ENCODE measurements at regions of chr4 and their contacts with region 1.

Region 1: GRCh38 chr4:155787113-155787710 is 28.4 kb downstream of the GUCY1B1 start:
- DNase-seq: no peak
- ATAC-seq: peak; percentile 95
- H3K4me3 ChIP-seq: no peak overlapping the region
- H3K27ac ChIP-seq: no peak overlapping the region
- H3K4me1 ChIP-seq: peaks cover 3% of the 10 kb centered on the region
- H3K27me3 ChIP-seq: no peaks in the 10 kb centered on the region
- CTCF ChIP-seq: peak; percentile 75

Region 2: DNA sequence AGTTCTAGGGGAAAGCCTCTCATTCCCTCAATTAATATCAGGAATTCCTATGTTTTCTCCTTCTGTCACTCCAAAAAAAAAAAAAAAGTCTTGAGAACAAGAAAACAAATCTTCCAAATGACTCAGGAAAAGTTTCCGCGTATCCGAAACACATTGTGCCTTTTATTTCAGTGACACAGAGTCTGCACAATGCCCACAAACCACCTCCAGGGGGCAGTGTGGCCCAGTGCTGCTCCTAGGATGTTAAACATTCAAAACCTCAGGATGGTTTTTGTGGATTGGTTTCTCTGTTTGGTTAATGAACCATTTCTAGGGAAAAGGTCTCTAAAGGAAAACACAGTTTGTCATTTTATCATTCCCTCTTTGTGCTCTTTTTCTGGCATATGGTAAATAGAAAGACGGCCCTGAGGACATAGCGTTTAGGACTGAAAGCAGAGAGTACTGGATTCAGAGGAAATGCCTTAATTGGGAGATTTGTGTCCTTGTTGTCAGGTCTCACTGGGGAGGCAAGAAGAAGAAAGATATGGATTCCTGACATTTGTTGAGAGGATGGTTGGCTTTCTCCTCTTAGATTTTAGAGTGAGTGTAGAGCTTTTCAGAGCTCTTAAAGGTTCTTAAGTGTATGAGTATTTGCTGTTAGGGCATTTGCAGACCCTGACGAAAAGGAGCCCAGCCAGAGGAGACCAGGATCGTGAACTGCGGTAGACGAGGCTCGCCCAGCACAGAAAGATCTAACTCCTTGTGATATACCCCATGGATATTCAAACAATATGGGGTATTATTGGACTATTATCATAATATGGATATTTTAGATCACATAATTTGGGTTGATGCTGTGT is 344.7 kb before region 1 on chr4:
- intact Hi-C with region 1: loop called (anchors 10 kb)
- DNase-seq: peak; percentile 87
- ATAC-seq: peak; percentile 97
- H3K4me3 ChIP-seq: peak overlapping the region; percentile 15
- H3K27ac ChIP-seq: peak overlapping the region; percentile 18
- H3K4me1 ChIP-seq: no peaks in the 10 kb centered on the region
- H3K27me3 ChIP-seq: no peaks in the 10 kb centered on the region
- CTCF ChIP-seq: peak; percentile 95

Region 3: GRCh38 chr4:156169011-156169410 is 381.8 kb after region 1 on chr4:
- intact Hi-C with region 1: no loop called
- DNase-seq: no peak
- ATAC-seq: peak; percentile 69
- H3K4me3 ChIP-seq: no peak overlapping the region
- H3K27ac ChIP-seq: no peak overlapping the region
- H3K4me1 ChIP-seq: no peaks in the 10 kb centered on the region
- H3K27me3 ChIP-seq: no peaks in the 10 kb centered on the region
- CTCF ChIP-seq: peak; percentile 46

Region 4: DNA sequence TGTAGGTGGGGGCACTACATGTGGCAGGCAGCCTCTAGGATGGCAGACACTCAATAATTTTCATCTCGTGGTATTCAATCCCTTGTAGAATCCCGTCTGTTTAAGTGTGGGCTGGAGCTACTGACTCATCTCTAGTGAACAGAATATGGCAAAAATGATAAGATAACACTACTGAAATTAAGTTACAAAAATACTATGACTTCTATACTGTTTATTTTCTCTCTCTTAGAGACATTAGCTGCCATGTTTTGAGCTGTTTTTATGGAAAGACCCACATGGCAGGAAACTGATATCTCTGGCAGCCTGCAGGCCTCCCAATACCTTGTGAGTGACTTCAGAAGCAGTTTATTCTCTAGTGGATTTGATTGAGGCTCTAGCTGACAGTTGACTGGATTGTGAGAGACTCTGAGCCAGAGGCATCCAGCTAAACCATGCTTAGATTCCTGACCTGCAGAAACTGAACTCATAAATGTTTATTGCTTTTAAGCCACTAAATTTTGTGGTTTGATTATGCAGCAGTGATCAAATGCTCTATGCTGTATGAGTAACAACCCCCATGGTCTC is 465.2 kb after region 1 on chr4:
- intact Hi-C with region 1: no loop called
- DNase-seq: no peak
- ATAC-seq: no peak
- H3K4me3 ChIP-seq: no peak overlapping the region
- H3K27ac ChIP-seq: no peak overlapping the region
- H3K4me1 ChIP-seq: no peaks in the 10 kb centered on the region
- H3K27me3 ChIP-seq: no peaks in the 10 kb centered on the region
- CTCF ChIP-seq: no peak

Measured in upper lobe of right lung (tissue), 1 donor.